Left lung (tissue), 14 donors: ENCODE measurements at regions of chr10 and their contacts with region 1.

Region 1: GRCh38 chr10:13776861-13777311 is 190.1 kb downstream of the PRPF18 start:
- DNase-seq: no peak
- ATAC-seq: no peak
- H3K4me3 ChIP-seq: no peak overlapping the region
- H3K27ac ChIP-seq: no peak overlapping the region
- H3K4me1 ChIP-seq: no peaks in the 10 kb centered on the region
- H3K27me3 ChIP-seq: no peaks in the 10 kb centered on the region
- CTCF ChIP-seq: no peak

Region 2: GRCh38 chr10:13613519-13613918 is 163.4 kb before region 1 on chr10:
- intact Hi-C with region 1: loop called in 1 of 2 experiments (anchors 10 kb)
- DNase-seq: peak in 1 of 4 donors; percentile 76
- ATAC-seq: peak; percentile 54
- H3K4me3 ChIP-seq: no peak overlapping the region
- H3K27ac ChIP-seq: no peak overlapping the region
- H3K4me1 ChIP-seq: no peaks in the 10 kb centered on the region
- H3K27me3 ChIP-seq: no peaks in the 10 kb centered on the region
- CTCF ChIP-seq: peak in 1 of 2 donors; percentile 12

Region 3: GRCh38 chr10:13633689-13634088 is 143.2 kb before region 1 on chr10:
- intact Hi-C with region 1: no loop called
- DNase-seq: peak in 1 of 4 donors; percentile 68
- ATAC-seq: peak; percentile 31
- H3K4me3 ChIP-seq: no peak overlapping the region
- H3K27ac ChIP-seq: peak overlapping the region in 1 of 2 donors; percentile 47
- H3K4me1 ChIP-seq: no peaks in the 10 kb centered on the region
- H3K27me3 ChIP-seq: no peaks in the 10 kb centered on the region
- CTCF ChIP-seq: no peak

Region 4: GRCh38 chr10:13659897-13660550 is 116.9 kb before region 1 on chr10:
- intact Hi-C with region 1: loop called in 1 of 2 experiments (anchors 5 kb)
- DNase-seq: peak; percentile 73 to 92 (median 89)
- ATAC-seq: peak; percentile 85
- H3K4me3 ChIP-seq: no peak overlapping the region
- H3K27ac ChIP-seq: peak overlapping the region; percentile 62 to 64
- H3K4me1 ChIP-seq: peaks cover 4 to 20% of the 10 kb centered on the region in 2 donors
- H3K27me3 ChIP-seq: no peaks in the 10 kb centered on the region
- CTCF ChIP-seq: peak; percentile 72 to 86

Region 5: DNA sequence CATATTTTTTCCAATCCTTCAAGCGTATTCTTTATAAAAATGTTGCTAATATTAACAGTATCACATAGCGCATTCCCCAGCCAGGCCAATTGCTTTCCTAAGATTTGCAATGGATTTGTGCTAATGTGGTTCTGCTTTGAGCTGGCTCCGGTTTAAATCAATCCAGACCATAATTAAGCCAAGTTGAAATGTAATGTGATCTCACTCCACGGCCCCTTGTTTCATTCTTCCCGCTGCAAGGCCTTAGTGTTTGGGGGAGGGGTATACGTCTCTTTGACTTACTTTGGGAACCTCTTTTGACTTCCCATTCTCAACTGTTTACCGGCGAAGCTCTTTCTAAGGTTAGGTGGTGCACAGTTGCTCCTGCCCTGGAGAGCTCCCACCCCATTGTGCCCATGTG is 103.7 kb before region 1 on chr10:
- intact Hi-C with region 1: loop called in 1 of 2 experiments (anchors 10 kb)
- DNase-seq: no peak
- ATAC-seq: no peak
- H3K4me3 ChIP-seq: no peak overlapping the region
- H3K27ac ChIP-seq: no peak overlapping the region
- H3K4me1 ChIP-seq: peaks cover 0 to 10% of the 10 kb centered on the region in 2 donors
- H3K27me3 ChIP-seq: no peaks in the 10 kb centered on the region
- CTCF ChIP-seq: no peak

Region 6: DNA sequence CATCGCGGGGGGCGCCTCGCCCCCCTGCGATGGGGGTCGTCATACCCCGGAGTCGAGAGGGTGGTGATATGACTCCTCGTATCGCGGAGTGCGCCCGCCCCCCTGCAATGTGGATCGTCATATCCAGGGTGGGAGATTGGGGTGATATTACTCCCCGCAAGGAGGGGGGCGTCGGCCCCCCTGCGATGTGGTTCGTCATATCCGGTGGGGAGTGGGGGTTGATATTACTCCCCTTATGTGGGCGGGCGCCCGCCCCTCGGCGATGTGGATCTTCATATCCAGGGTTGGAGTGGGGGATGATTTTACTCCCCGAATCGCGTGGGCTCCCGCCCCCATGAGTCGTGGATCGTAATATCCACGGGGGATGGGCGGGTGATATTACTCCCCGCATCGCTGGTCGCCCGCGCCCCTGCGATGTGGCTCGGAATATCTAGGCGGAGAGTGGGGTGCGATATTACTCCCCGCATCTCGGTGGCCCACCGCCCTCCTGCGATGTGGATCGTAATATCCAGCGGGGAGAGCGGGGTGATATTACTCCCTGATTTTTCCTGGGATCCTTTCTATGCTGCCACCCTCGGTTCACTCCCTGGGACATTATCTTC is 1219.2 kb after region 1 on chr10:
- intact Hi-C with region 1: no loop called
- DNase-seq: peak in 1 of 4 donors; percentile 67
- ATAC-seq: no peak
- H3K4me3 ChIP-seq: no peak overlapping the region
- H3K27ac ChIP-seq: no peak overlapping the region
- H3K4me1 ChIP-seq: no peaks in the 10 kb centered on the region
- H3K27me3 ChIP-seq: peaks cover 0 to 11% of the 10 kb centered on the region in 2 donors
- CTCF ChIP-seq: no peak